Mammary epithelial cell (primary cell): ENCODE measurements at regions of chr17 and their contacts with region 1.

Region 1: GRCh38 chr17:73210002-73210678 is 17.3 kb downstream of the COG1 start:
- DNase-seq: no peak
- H3K4me3 ChIP-seq: no peak overlapping the region
- H3K27ac ChIP-seq: no peak overlapping the region
- H3K4me1 ChIP-seq: peaks cover 12% of the 10 kb centered on the region
- H3K27me3 ChIP-seq: no peaks in the 10 kb centered on the region
- CTCF ChIP-seq: peak; percentile 34 to 37

Region 2: GRCh38 chr17:73196500-73196899 is 13.6 kb before region 1 on chr17:
- CTCF ChIA-PET with region 1: no interaction called
- dilution Hi-C with region 1: no loop called
- in situ Hi-C with region 1: no loop called
- intact Hi-C with region 1: no loop called
- DNase-seq: no peak
- H3K4me3 ChIP-seq: no peak overlapping the region
- H3K27ac ChIP-seq: no peak overlapping the region
- H3K4me1 ChIP-seq: peaks cover 4% of the 10 kb centered on the region
- H3K27me3 ChIP-seq: no peaks in the 10 kb centered on the region
- CTCF ChIP-seq: no peak

Region 3: DNA sequence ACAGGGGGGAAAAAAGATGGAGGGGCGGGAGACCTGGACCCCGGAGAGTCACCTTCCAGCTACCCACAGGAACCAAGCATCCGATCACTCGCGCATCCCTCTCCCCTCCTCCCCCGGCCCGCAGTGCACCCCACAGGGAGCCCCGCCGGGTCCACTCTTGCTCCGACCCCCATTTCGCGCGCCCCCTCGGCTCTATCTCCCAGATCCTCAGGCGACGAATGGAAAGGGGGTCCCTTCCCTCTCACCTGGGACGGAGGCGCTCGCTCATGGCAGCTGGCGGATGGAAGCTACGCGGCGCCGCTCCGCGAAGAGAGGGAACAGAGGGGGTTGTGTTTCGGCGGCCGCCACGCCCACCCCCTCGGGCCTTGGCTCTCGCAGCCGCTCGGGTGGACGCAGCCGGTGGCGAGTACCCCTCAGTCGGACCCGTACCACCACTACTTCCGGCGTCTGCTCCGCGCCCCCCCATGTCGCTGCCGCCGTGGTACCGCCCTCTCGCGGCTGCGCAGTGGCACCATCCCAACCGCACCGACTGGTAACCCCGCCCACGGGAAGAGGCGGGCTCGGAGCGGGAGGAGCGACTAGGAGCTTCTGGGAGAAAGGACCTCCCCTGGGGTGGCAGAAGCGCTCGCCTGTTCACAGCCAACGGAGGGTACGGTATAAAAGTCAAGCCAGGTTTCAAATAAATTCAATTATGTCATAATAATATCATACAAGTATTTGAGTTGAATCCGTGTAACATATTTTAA is 21.9 kb after region 1 on chr17:
- CTCF ChIA-PET with region 1: no interaction called
- dilution Hi-C with region 1: no loop called
- in situ Hi-C with region 1: no loop called
- intact Hi-C with region 1: loop called (anchors 2 kb)
- DNase-seq: peak; percentile 90
- H3K4me3 ChIP-seq: peak overlapping the region; percentile 95 to 100 (median 99)
- H3K27ac ChIP-seq: peak overlapping the region; percentile 72
- H3K4me1 ChIP-seq: peaks cover 37% of the 10 kb centered on the region
- H3K27me3 ChIP-seq: no peaks in the 10 kb centered on the region
- CTCF ChIP-seq: peak in 1 of 2 donors; percentile 25